Posterior vena cava (tissue), 2 donors: ENCODE measurements at regions of chr2 and their contacts with region 1.

Region 1: GRCh38 chr2:16209799-16210198 is 269.4 kb downstream of the MYCN start:
- DNase-seq: no peak

Region 2: GRCh38 chr2:16251511-16252225 is 41.9 kb after region 1 on chr2:
- intact Hi-C with region 1: loop called in 1 of 2 experiments (anchors 2 kb)
- DNase-seq: no peak